ENCODE measurements at regions of chr15 and their contacts with region 1.

Region 1: GRCh38 chr15:80173022-80173759 is 20.4 kb downstream of the FAH start:
- DNase-seq: peak; percentile 58
- H3K4me3 ChIP-seq: no peak overlapping the region
- H3K27ac ChIP-seq: no peak overlapping the region
- H3K4me1 ChIP-seq: peaks cover 3% of the 10 kb centered on the region
- H3K27me3 ChIP-seq: no peaks in the 10 kb centered on the region
- CTCF ChIP-seq: peak; percentile 75 to 82
- POLR2A ChIP-seq: no peak

Region 2: DNA sequence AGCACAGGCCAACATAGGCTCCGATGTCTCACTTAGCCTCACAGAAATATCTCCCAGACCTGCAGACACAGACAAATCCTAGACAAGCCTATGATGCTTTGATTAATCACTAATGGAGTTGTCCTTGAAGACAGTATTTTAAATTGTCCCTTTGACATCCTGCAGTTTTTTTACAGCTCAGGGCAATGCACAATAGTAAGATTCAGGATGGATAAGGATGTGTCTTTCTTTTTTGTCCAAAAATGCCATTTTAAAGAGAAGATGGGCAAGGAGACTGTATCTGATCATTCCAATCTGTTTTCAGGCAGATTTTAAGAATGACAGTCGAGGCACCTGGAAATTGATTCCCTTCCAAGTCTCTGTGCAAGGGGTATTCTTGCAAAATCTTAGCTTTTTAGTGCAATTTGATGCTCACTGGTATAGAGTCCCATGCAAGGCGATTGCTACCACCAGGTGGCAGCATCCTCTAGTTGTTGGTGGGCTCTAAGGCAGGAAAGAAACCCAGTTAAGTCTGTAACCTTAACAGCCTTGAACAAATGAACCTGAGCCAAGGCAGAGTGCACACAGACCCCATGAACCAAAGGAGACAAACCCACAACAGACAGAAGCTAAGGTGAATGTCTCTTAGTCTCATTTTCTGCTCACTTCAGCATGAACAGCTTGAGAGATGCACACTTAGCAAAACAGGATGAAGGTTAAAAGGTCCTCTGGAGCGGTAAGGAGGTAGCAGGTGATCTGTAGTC is 792.3 kb before region 1 on chr15:
- CTCF ChIA-PET with region 1: interaction called, 30 read pairs
- POLR2A ChIA-PET with region 1: no interaction called
- dilution Hi-C with region 1: no loop called
- intact Hi-C with region 1: loop called (anchors 10 kb)
- DNase-seq: peak; percentile 77
- H3K4me3 ChIP-seq: no peak overlapping the region
- H3K27ac ChIP-seq: no peak overlapping the region
- H3K4me1 ChIP-seq: no peaks in the 10 kb centered on the region
- H3K27me3 ChIP-seq: no peaks in the 10 kb centered on the region
- CTCF ChIP-seq: peak; percentile 81 to 87
- POLR2A ChIP-seq: no peak

Region 3: GRCh38 chr15:79923515-79924395 is 249.4 kb before region 1 on chr15:
- CTCF ChIA-PET with region 1: interaction called, 4 read pairs
- POLR2A ChIA-PET with region 1: no interaction called
- dilution Hi-C with region 1: no loop called
- intact Hi-C with region 1: loop called (anchors 2 kb)
- DNase-seq: peak; percentile 93
- H3K4me3 ChIP-seq: peak overlapping the region; percentile 87 to 96 (median 92)
- H3K27ac ChIP-seq: peak overlapping the region; percentile 52
- H3K4me1 ChIP-seq: peaks cover 10% of the 10 kb centered on the region
- H3K27me3 ChIP-seq: no peaks in the 10 kb centered on the region
- CTCF ChIP-seq: no peak
- POLR2A ChIP-seq: peak; percentile 85

Region 4: GRCh38 chr15:80031841-80032240 is 141.3 kb before region 1 on chr15:
- CTCF ChIA-PET with region 1: interaction called, 7 read pairs
- POLR2A ChIA-PET with region 1: no interaction called
- dilution Hi-C with region 1: no loop called
- intact Hi-C with region 1: loop called (anchors 2 kb)
- DNase-seq: no peak
- H3K4me3 ChIP-seq: no peak overlapping the region
- H3K27ac ChIP-seq: no peak overlapping the region
- H3K4me1 ChIP-seq: peaks cover 18% of the 10 kb centered on the region
- H3K27me3 ChIP-seq: no peaks in the 10 kb centered on the region
- CTCF ChIP-seq: no peak
- POLR2A ChIP-seq: no peak

Region 5: GRCh38 chr15:80072285-80072994 is 100.8 kb before region 1 on chr15:
- CTCF ChIA-PET with region 1: interaction called, 12 read pairs
- POLR2A ChIA-PET with region 1: interaction called, 3 read pairs
- dilution Hi-C with region 1: no loop called
- intact Hi-C with region 1: no loop called
- DNase-seq: peak; percentile 95
- H3K4me3 ChIP-seq: peak overlapping the region; percentile 34 to 98 (median 92)
- H3K27ac ChIP-seq: peak overlapping the region; percentile 32
- H3K4me1 ChIP-seq: peaks cover 16% of the 10 kb centered on the region
- H3K27me3 ChIP-seq: no peaks in the 10 kb centered on the region
- CTCF ChIP-seq: no peak
- POLR2A ChIP-seq: no peak

Region 6: DNA sequence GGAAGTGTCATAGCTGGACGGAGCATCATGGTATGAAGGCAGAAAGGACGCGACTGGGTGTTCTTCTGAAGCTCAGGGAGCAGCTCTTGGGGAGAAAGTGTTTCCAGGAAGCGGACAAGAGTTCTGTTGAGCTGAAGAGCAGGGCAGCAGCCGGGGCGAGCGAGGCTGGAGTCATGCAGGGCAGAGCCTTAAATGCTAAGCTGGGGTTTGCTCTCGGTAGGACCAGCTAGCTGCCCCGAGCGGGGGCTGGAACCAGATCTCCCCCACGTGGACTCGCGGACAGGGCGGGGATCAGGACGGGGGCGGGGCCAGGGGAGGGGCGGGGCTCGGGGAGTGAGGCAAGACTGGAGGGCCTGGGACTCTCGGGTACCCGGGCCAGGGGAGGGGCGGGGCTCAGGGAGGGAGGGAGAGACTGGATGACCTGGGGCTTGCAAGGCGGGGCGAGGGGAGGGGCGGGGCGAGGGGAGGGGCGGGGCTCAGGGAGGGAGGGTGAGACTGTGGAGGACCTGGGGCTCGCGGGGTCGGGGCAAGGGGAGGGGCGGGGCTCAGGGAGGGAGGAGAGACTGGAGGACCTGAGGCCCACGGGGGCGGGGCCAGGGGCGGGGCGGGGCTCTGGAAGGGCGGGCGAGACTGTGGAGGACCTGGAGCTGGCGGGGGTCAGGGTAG is 20.9 kb before region 1 on chr15:
- CTCF ChIA-PET with region 1: interaction called, 30 read pairs
- POLR2A ChIA-PET with region 1: no interaction called
- dilution Hi-C with region 1: no loop called
- intact Hi-C with region 1: loop called (anchors 1 kb)
- DNase-seq: peak; percentile 86
- H3K4me3 ChIP-seq: peak overlapping the region in 2 of 3 experiments; percentile 17 to 75
- H3K27ac ChIP-seq: no peak overlapping the region
- H3K4me1 ChIP-seq: peaks cover 9% of the 10 kb centered on the region
- H3K27me3 ChIP-seq: peaks cover 0 to 2% of the 10 kb centered on the region in 2 experiments
- CTCF ChIP-seq: no peak
- POLR2A ChIP-seq: no peak